GM10248 (cell line): ENCODE measurements at regions of chr13 and their contacts with region 1.

Region 1: GRCh38 chr13:41075034-41075433 is 13.7 kb downstream of the WBP4 start:
- DNase-seq: peak; percentile 35
- CTCF ChIP-seq: peak; percentile 43

Region 2: GRCh38 chr13:40477623-40478608 is 597.1 kb before region 1 on chr13:
- CTCF ChIA-PET with region 1: no interaction called
- POLR2A ChIA-PET with region 1: no interaction called
- DNase-seq: no peak
- CTCF ChIP-seq: no peak

Region 3: DNA sequence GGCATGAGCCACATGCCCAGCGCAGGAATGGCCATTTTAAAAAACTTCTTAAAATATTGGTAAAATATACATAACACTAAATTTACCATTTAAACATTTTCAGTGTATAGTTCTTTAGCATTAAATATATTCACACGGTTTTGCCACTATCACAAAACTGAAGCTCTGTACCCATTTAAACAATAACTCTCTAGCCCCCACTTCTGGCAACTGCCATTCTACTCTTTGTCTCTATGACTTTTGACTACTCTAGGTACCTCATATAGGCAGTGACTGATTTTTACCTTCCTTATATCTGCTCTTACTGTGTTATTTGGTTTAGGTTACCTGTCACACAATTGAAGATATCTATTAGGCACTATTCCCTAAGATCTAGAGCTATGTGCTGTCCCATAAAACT is 121.6 kb after region 1 on chr13:
- CTCF ChIA-PET with region 1: interaction called, 11 read pairs
- POLR2A ChIA-PET with region 1: no interaction called
- DNase-seq: no peak
- CTCF ChIP-seq: peak; percentile 31

Region 4: GRCh38 chr13:41222259-41222852 is 147.3 kb after region 1 on chr13:
- CTCF ChIA-PET with region 1: interaction called, 16 read pairs
- POLR2A ChIA-PET with region 1: no interaction called
- DNase-seq: peak; percentile 68
- CTCF ChIP-seq: peak; percentile 79